PC-3 (cell line): ENCODE measurements at regions of chr17 and their contacts with region 1.

Region 1: DNA sequence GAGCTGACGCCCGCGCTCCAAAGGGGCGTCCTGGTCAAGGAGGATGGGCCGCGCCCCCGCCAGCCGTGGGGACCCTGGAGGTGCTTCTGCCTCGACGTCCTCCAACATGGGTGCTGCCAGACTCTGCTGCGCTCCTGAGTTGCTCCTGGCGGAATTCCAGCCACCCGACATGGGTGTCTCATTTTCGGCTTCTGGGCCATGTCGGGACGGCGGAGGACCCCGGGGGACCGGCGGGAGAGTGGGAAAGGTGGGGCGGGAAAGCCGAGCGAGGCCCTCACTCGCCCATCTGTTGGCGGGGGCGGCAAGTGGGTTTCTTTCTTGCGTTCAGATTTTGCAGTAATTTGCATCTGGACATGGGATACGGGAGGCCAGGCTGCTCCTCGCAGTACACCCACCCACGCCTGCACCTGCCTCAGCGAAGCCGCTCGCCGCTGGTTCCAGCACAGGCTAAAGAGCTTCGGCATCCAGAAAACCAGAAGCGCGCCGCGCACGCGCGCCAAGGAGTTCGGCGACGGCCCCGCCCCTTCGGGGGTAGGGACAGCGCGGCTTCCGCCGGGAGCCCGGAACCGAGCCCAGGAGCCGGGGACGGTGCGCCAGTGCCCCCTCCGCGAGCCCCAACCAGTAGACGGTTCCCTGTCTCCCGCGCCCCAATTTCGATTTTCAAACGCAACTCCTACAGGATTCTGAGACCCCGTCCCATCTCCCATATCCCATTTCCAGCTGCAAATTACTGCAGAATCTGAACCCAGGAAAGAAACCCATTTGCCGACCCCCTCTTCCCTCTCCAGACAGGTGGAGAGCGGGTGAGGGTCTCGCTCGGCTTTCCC is at the start of gene ARMC7:
- DNase-seq: peak; percentile 96
- ATAC-seq: peak; percentile 63
- H3K4me3 ChIP-seq: peak within 1 kb of the TSS; percentile 97
- H3K27ac ChIP-seq: no peak within 1 kb of the TSS
- H3K4me1 ChIP-seq: peaks cover 35% of the 10 kb centered on the region
- H3K27me3 ChIP-seq: no peaks in the 10 kb centered on the region
- CTCF ChIP-seq: peak; percentile 19; the same call in 1 of the 2 replicates
- total RNA-seq, gene ARMC7: 17.0 and 17.3 TPM in 2 replicates

Region 2: DNA sequence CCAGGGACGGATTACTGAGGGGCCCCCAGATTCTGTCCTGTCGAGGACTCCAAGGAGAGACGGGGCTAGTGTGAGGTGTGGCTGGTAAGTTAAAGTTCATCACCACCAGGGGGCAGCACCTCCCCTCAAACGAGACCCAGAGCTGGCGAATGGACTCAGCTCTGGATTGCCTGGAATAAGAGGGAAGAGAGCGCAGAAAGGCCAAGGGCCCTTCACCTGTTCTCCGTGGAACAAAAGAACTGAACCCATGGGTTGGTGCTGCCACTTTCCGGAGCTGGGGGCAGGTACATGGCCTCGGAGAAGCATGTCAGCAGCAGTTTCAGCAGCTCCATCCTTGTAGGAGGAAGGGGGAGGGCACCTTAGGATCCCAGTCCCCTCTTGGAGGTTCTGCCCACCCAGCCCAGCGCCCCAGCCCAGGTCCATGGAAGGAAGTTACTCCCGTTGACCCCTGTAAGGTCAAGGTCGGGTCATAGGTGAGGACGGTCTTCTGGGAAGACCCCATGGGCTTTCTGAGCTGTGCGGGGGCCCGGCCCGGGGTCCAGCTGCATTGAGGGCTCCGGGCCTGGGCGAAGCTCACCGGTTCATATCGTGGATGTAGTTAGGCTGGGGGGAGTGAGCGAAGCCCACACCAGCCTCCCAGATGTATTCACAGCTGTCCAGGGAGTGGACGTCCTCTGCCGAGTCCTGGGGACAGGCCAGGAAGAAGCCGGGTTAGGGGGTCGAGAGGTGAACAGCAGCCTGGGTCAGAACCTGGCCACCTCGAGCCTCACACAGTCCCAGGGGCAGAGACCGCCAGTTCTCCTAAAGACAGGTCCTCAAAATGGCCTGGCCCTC is 147.7 kb before region 1 on chr17:
- CTCF ChIA-PET with region 1: interaction called, 6 read pairs
- POLR2A ChIA-PET with region 1: no interaction called
- intact Hi-C with region 1: loop called (anchors 2 kb)
- DNase-seq: peak; percentile 95
- ATAC-seq: peak; percentile 92
- H3K4me3 ChIP-seq: no peak overlapping the region
- H3K27ac ChIP-seq: no peak overlapping the region
- H3K4me1 ChIP-seq: no peaks in the 10 kb centered on the region
- H3K27me3 ChIP-seq: no peaks in the 10 kb centered on the region
- CTCF ChIP-seq: peak; percentile 93

Region 3: DNA sequence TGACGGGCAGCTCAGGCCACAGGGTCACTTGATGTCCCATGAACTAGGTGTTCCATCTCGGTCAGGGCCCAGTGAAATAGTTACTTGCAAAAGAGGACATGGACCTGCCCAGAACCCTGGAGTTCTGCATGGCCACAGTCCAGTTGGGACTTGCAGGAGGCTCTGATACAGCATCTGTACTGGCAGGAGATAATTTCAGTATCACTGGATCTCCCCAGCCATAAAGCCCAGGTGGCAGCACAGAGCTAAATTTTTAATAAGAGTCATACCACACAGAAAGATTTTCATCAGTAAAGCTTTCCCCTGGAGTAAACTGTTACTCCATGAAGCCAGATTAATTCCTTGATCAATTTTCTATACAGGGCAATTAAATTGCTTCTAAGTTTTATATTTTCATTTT is 39.8 kb before region 1 on chr17:
- CTCF ChIA-PET with region 1: interaction called, 23 read pairs
- POLR2A ChIA-PET with region 1: interaction called, 4 read pairs
- intact Hi-C with region 1: loop called (anchors 1 kb)
- DNase-seq: peak; percentile 83
- ATAC-seq: peak; percentile 91
- H3K4me3 ChIP-seq: no peak overlapping the region
- H3K27ac ChIP-seq: no peak overlapping the region
- H3K4me1 ChIP-seq: no peaks in the 10 kb centered on the region
- H3K27me3 ChIP-seq: no peaks in the 10 kb centered on the region
- CTCF ChIP-seq: peak; percentile 86

Region 4: GRCh38 chr17:75131280-75132017 is 21.8 kb after region 1 on chr17 and contains the start of gene NT5C:
- CTCF ChIA-PET with region 1: interaction called, 24 read pairs
- POLR2A ChIA-PET with region 1: no interaction called
- intact Hi-C with region 1: loop called (anchors 1 kb)
- DNase-seq: peak; percentile 76
- ATAC-seq: peak; percentile 68
- H3K4me3 ChIP-seq: peak within 1 kb of the TSS; percentile 72
- H3K27ac ChIP-seq: peak within 1 kb of the TSS; percentile 85
- H3K4me1 ChIP-seq: peaks cover 29% of the 10 kb centered on the region
- H3K27me3 ChIP-seq: no peaks in the 10 kb centered on the region
- CTCF ChIP-seq: peak; percentile 77
- total RNA-seq, gene NT5C: 116 and 131 TPM in 2 replicates

Region 5: DNA sequence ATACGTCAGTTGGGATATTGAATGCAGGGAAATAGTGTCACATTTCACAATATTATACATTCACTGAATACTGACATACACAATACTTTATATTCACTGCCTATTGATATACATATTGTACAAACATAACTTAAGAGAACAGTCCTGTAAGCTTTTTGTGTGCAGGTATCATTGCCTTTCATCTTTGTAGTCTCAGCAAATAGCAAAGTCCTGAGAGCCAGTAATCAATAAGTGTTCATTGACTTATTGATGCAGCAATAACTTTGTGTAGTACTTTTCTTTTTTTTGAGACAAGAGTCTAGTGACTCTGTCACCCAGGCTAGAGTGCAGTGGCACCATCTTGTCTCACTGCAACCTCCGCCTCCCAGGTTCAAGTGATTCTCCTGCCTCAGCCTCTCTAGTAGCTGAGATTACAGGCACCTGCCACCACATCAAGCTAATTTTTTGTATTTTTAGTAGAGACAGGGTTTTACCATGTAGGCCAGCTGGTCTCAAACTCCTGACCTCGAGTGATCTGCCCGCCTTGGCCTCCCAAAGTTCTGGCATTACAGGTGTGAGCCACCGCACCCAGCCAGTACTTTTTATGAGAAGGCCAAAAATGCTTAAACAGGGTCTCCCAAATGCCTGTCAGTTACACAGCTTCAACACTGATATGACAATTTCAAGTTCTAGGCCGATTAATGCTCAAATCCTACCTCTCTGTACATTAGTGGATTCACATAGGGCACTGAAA is 90.4 kb after region 1 on chr17:
- CTCF ChIA-PET with region 1: interaction called, 57 read pairs
- POLR2A ChIA-PET with region 1: no interaction called
- intact Hi-C with region 1: loop called (anchors 1 kb)
- DNase-seq: no peak
- ATAC-seq: no peak
- H3K4me3 ChIP-seq: no peak overlapping the region
- H3K27ac ChIP-seq: no peak overlapping the region
- H3K4me1 ChIP-seq: peaks cover 5% of the 10 kb centered on the region; the same call in 1 of the 2 replicates
- H3K27me3 ChIP-seq: no peaks in the 10 kb centered on the region
- CTCF ChIP-seq: no peak